T-cell (primary cell): ENCODE measurements at regions of chr17 and their contacts with region 1.

Region 1: GRCh38 chr17:41548844-41549595 is 20.9 kb upstream of the KRT19 start:
- DNase-seq: peak; percentile 67 to 91 (median 83)
- ATAC-seq: peak; percentile 87 to 91 (median 89)
- H3K4me3 ChIP-seq: peak overlapping the region; percentile 26 to 39
- H3K4me3 Mint-ChIP-seq: peak overlapping the region; percentile 34 to 77 (median 63)
- H3K27ac ChIP-seq: peak overlapping the region; percentile 51
- H3K27ac Mint-ChIP-seq: peak overlapping the region; percentile 61 to 76
- H3K4me1 ChIP-seq: peaks cover 0 to 20% of the 10 kb centered on the region in 2 experiments
- H3K4me1 Mint-ChIP-seq: peaks cover 10 to 21% (median 17%) of the 10 kb centered on the region in 3 donors
- H3K27me3 ChIP-seq: peaks cover 0 to 42% of the 10 kb centered on the region in 2 experiments
- H3K27me3 Mint-ChIP-seq: peaks cover 4 to 11% of the 10 kb centered on the region in 2 donors

Region 2: DNA sequence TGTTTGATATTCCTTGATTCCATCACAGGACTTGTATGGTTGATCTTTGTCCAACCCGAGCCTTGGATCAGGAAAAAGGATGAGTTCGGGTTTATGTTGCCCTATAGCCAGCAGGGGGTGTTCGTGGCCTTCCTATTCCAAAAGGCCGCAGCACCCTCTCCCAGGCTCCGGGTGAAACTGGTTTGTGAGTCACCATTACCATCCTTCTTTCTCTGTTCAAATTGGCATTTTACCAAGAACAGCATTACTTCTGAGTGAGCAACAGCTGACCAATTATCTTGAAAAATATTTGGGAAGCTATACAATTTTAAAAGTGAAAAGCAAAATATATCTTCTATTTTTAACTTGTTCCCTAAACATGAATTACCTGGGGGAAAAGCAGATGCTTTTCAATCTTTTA is 639.7 kb before region 1 on chr17:
- CTCF ChIA-PET with region 1: interaction called in 1 of 2 experiments, 12 read pairs
- POLR2A ChIA-PET with region 1: no interaction called
- DNase-seq: peak in 34 of 35 experiments; percentile 24 to 80 (median 49)
- ATAC-seq: peak; percentile 80 to 84 (median 82)
- H3K4me3 ChIP-seq: no peak overlapping the region
- H3K4me3 Mint-ChIP-seq: no peak overlapping the region
- H3K27ac ChIP-seq: no peak overlapping the region
- H3K27ac Mint-ChIP-seq: no peak overlapping the region
- H3K4me1 ChIP-seq: no peaks in the 10 kb centered on the region
- H3K4me1 Mint-ChIP-seq: no peaks in the 10 kb centered on the region
- H3K27me3 ChIP-seq: peaks cover 5 to 21% of the 10 kb centered on the region in 2 experiments
- H3K27me3 Mint-ChIP-seq: peaks cover 37 to 49% of the 10 kb centered on the region in 2 donors

Region 3: GRCh38 chr17:41648411-41649195 is 99.6 kb after region 1 on chr17:
- CTCF ChIA-PET with region 1: interaction called, 10 to 34 read pairs
- POLR2A ChIA-PET with region 1: no interaction called
- DNase-seq: peak; percentile 41 to 91 (median 79)
- ATAC-seq: peak; percentile 87 to 92 (median 88)
- H3K4me3 ChIP-seq: peak overlapping the region; percentile 55 to 76
- H3K4me3 Mint-ChIP-seq: peak overlapping the region in 2 of 3 donors; percentile 74 to 75
- H3K27ac ChIP-seq: no peak overlapping the region
- H3K27ac Mint-ChIP-seq: peak overlapping the region in 1 of 2 donors; percentile 49
- H3K4me1 ChIP-seq: peaks cover 2 to 16% of the 10 kb centered on the region in 2 experiments
- H3K4me1 Mint-ChIP-seq: peaks cover 9 to 10% (median 9%) of the 10 kb centered on the region in 3 donors
- H3K27me3 ChIP-seq: peaks cover 0 to 16% of the 10 kb centered on the region in 2 experiments
- H3K27me3 Mint-ChIP-seq: no peaks in the 10 kb centered on the region

Region 4: GRCh38 chr17:41659427-41660212 is 110.6 kb after region 1 on chr17:
- CTCF ChIA-PET with region 1: interaction called, 11 to 26 read pairs
- POLR2A ChIA-PET with region 1: interaction called in 1 of 2 experiments, 20 read pairs
- DNase-seq: no peak
- ATAC-seq: no peak
- H3K4me3 ChIP-seq: no peak overlapping the region
- H3K4me3 Mint-ChIP-seq: no peak overlapping the region
- H3K27ac ChIP-seq: no peak overlapping the region
- H3K27ac Mint-ChIP-seq: no peak overlapping the region
- H3K4me1 ChIP-seq: peaks cover 0 to 7% of the 10 kb centered on the region in 2 experiments
- H3K4me1 Mint-ChIP-seq: peaks cover 2 to 4% (median 2%) of the 10 kb centered on the region in 3 donors
- H3K27me3 ChIP-seq: peaks cover 0 to 36% of the 10 kb centered on the region in 2 experiments
- H3K27me3 Mint-ChIP-seq: peaks cover 0 to 2% of the 10 kb centered on the region in 2 donors